Breast epithelium (tissue), 4 donors: ENCODE measurements at regions of chr7 and their contacts with region 1.

Region 1: DNA sequence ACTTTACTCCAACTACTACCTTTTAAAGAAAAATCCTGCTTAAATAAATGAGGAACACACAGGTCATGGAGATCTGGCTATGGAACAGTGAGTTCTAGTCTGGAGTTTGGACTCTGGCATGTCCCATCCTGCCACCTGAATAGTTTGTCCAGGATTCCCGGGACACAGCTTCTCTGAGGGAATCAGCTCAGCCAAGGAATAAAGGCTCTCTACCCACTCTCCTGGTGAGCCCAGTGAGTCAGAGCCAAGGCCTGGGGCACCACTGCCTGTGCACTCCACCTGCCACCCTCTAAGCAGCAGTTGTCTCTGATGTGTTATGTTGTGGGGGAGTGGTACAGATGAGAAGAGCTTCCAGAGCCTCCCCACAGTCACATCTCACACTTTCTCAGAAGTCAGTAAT is 113.5 kb downstream of the HTR5A start:
- DNase-seq: no peak
- H3K4me3 ChIP-seq: no peak overlapping the region
- H3K27ac ChIP-seq: no peak overlapping the region
- H3K4me1 ChIP-seq: no peaks in the 10 kb centered on the region
- H3K27me3 ChIP-seq: peaks cover 0 to 4% of the 10 kb centered on the region in 2 donors
- CTCF ChIP-seq: no peak
- POLR2A ChIP-seq: no peak

Region 2: DNA sequence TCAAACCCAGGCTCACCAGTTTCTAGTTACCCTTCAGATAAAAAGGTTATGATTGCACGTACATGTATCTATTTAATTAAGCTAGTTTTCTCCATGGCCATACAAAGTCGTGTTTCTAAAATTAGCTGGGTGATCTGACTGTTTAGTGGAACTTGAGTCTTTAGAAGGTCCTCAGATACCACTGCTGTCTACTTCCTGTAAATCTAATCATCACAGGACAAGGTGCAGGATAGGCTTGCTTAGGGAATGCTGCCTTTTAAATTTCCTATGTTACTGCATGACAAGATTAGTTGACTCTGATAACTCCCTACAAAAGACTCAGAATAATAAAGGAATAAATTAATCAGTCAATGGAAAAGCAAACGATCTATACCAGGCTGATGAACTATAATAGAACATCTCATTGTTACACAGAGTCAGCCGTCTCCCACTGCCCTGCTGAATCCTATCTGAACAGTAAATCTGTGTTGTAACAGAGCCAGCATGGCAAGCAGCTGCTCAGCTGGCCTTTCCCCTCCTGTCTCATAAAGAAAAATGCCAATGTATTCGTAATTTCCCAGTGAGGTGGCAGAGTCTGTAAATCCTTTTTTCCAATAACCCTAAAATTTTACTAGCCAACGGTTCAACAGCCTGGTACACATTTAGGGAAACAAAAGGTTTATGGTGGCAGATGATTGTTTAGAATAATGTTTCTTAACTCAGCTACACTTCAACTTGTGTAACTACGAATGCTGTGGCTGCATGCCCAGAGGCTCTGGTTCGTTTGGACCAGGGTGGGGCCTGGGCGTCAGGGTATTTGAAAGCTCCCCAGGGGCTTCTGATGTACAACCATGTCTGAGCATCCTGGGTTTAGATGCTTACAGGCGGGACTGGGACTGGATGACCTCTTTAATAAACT is 498.7 kb before region 1 on chr7:
- intact Hi-C with region 1: no loop called
- DNase-seq: no peak
- H3K4me3 ChIP-seq: no peak overlapping the region
- H3K27ac ChIP-seq: no peak overlapping the region
- H3K4me1 ChIP-seq: no peaks in the 10 kb centered on the region
- H3K27me3 ChIP-seq: no peaks in the 10 kb centered on the region
- CTCF ChIP-seq: no peak
- POLR2A ChIP-seq: no peak

Region 3: GRCh38 chr7:155161690-155162089 is 22.0 kb before region 1 on chr7:
- intact Hi-C with region 1: loop called (anchors 2 kb)
- DNase-seq: no peak
- H3K4me3 ChIP-seq: no peak overlapping the region
- H3K27ac ChIP-seq: no peak overlapping the region
- H3K4me1 ChIP-seq: no peaks in the 10 kb centered on the region
- H3K27me3 ChIP-seq: peaks cover 0 to 3% of the 10 kb centered on the region in 2 donors
- CTCF ChIP-seq: no peak
- POLR2A ChIP-seq: no peak